Posterior vena cava (tissue), 2 donors: ENCODE measurements at regions of chr3 and their contacts with region 1.

Region 1: GRCh38 chr3:53970661-53971060 is 79.0 kb upstream of the SELENOK start:
- DNase-seq: no peak

Region 2: GRCh38 chr3:54087581-54088410 is 117.1 kb after region 1 on chr3:
- intact Hi-C with region 1: loop called in 1 of 2 experiments (anchors 10 kb)
- DNase-seq: no peak